ENCODE measurements at regions of chr18 and their contacts with region 1.

Region 1: GRCh38 chr18:70491734-70492348 is 203.0 kb downstream of the SOCS6 start:
- DNase-seq: peak; percentile 71
- H3K4me3 Mint-ChIP-seq: no peak overlapping the region
- H3K27ac Mint-ChIP-seq: no peak overlapping the region
- H3K4me1 Mint-ChIP-seq: peaks cover 2% of the 10 kb centered on the region
- H3K27me3 Mint-ChIP-seq: peaks cover 2% of the 10 kb centered on the region

Region 2: DNA sequence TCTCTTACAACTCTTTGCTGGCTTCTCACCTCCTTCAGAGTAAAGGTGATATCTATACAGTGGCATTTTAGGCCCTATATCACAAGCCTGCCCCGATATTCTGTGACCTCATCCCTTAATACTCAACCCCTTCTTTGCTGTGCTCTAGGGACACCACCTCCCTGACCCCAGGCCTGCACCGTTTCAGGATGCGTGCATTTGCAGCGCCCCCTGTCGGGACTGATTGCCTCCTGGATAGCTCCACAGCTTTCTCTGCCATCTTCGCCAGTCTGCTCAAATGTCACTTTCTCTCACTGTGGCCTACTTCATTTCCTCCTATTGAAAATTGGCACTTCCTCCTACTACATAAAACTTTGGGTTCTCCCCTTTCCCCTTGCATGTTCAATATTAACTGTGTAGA is 86.6 kb after region 1 on chr18:
- CTCF ChIA-PET with region 1: interaction called, 10 read pairs
- intact Hi-C with region 1: no loop called
- DNase-seq: no peak
- H3K4me3 Mint-ChIP-seq: no peak overlapping the region
- H3K27ac Mint-ChIP-seq: no peak overlapping the region
- H3K4me1 Mint-ChIP-seq: no peaks in the 10 kb centered on the region
- H3K27me3 Mint-ChIP-seq: no peaks in the 10 kb centered on the region

Region 3: GRCh38 chr18:71784777-71785176 is 1292.9 kb after region 1 on chr18:
- CTCF ChIA-PET with region 1: no interaction called
- intact Hi-C with region 1: loop called (anchors 2 kb)
- DNase-seq: peak; percentile 26
- H3K4me3 Mint-ChIP-seq: no peak overlapping the region
- H3K27ac Mint-ChIP-seq: no peak overlapping the region
- H3K4me1 Mint-ChIP-seq: no peaks in the 10 kb centered on the region
- H3K27me3 Mint-ChIP-seq: no peaks in the 10 kb centered on the region

Region 4: DNA sequence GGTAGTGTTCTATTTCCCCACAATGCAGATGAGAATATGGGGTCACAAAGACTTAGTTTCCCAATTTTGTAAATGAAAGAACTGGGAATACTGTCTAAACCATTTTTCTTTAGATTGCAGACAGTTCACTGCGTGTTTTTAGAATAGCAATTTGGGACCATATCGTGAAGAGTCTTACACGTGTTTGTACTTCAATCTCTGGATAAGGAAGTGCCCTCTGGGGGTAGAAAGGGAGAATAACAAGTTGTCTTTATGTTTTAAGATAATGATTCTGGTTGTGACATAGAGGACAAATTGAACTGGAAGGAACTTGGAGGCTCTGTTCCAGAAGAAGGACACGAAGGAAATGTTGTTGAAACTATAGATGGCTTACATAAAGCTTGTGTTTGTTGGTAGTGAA is 1594.6 kb after region 1 on chr18:
- CTCF ChIA-PET with region 1: no interaction called
- intact Hi-C with region 1: loop called (anchors 1 kb)
- DNase-seq: no peak
- H3K4me3 Mint-ChIP-seq: no peak overlapping the region
- H3K27ac Mint-ChIP-seq: no peak overlapping the region
- H3K4me1 Mint-ChIP-seq: peaks cover 2% of the 10 kb centered on the region
- H3K27me3 Mint-ChIP-seq: peaks cover 4% of the 10 kb centered on the region